GM12878 (cell line): ENCODE measurements at regions of chr11 and their contacts with region 1.

Region 1: DNA sequence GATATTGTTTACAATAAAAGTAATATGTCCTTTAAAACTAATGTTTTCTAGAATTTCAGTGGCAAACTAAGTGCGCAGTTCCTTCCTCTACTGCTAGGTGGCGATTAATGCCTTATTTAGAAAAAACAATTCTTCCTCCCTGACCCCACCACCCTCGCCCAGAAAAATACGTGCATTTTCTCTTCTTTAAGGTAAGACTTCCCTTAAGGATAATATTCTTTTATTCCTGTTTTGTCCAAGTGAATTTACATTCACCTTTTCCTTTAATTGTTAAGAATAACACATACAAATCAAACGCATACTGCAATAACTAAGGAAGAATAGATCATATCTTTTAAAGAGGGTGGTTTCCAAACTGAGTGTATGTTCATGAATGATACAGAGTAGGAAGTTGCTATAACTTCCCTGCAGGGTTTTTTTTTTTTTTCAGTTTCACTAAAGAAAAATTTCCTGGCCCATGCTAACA is 17.0 kb upstream of the PSMA1 start:
- DNase-seq: no peak
- ATAC-seq: peak; percentile 80
- H3K4me3 ChIP-seq: no peak overlapping the region
- H3K27ac ChIP-seq: no peak overlapping the region
- H3K4me1 ChIP-seq: no peaks in the 10 kb centered on the region
- H3K27me3 ChIP-seq: no peaks in the 10 kb centered on the region
- CTCF ChIP-seq: peak; percentile 69 to 88 (median 72)
- EP300 ChIP-seq: no peak
- POLR2A ChIP-seq: no peak
- RAD21 ChIP-seq: peak; percentile 76

Region 2: DNA sequence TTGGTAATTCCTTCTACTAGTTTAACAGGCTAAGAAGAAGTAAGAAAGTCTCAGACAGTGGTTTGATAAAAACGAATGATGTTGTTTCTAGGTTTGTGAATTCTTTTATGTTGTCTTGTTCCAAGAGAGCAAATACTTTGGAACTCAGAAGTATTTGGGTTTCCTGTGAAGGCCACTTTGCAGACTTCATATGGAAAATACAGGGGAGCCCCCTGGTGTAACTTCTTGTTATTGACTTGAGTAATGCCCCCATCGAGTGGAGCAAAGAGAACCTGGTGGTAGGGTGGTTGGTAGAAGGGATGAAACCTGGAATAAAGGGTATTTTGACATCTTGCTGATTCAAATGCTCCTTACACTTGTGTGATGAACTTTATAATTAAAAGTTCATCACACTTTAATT is 1001.3 kb before region 1 on chr11:
- CTCF ChIA-PET with region 1: no interaction called
- POLR2A ChIA-PET with region 1: no interaction called
- RAD21 ChIA-PET with region 1: no interaction called
- SMC1A ChIA-PET with region 1: no interaction called
- in situ Hi-C with region 1: no loop called
- intact Hi-C with region 1: no loop called
- DNase-seq: no peak
- ATAC-seq: no peak
- H3K4me3 ChIP-seq: no peak overlapping the region
- H3K27ac ChIP-seq: no peak overlapping the region
- H3K4me1 ChIP-seq: no peaks in the 10 kb centered on the region
- H3K27me3 ChIP-seq: no peaks in the 10 kb centered on the region
- CTCF ChIP-seq: no peak
- EP300 ChIP-seq: no peak
- POLR2A ChIP-seq: no peak
- RAD21 ChIP-seq: no peak

Region 3: DNA sequence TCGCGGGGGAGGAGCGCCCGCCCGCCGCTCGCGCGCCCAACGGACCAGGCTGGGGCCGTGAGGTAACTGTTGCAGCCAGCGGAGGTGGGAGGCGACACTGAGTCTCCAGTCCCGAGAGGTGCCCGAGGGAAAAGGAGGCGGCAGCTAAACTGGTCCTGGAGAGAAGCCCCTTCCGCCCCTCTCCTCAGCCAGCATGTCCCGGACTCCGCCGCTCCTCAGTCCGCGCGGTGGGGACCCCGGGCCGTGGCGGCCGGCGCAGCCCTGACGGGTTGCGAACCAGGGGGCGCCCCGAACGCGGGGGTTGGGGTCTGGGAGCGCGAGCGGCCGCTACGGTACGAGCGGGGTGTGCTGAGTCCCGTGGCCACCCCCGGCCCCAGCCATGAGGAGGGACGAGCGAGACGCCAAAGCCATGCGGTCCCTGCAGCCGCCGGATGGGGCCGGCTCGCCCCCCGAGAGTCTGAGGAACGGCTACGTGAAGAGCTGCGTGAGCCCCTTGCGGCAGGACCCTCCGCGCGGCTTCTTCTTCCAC is 106.6 kb after region 1 on chr11 and contains the start of gene PDE3B:
- CTCF ChIA-PET with region 1: no interaction called
- POLR2A ChIA-PET with region 1: no interaction called
- RAD21 ChIA-PET with region 1: no interaction called
- SMC1A ChIA-PET with region 1: no interaction called
- in situ Hi-C with region 1: no loop called
- intact Hi-C with region 1: loop called (anchors 2 kb)
- DNase-seq: no peak
- ATAC-seq: peak; percentile 56
- H3K4me3 ChIP-seq: peak within 1 kb of the TSS; percentile 61
- H3K27ac ChIP-seq: no peak within 1 kb of the TSS
- H3K4me1 ChIP-seq: no peaks in the 10 kb centered on the region
- H3K27me3 ChIP-seq: peaks cover 0 to 6% of the 10 kb centered on the region in 2 experiments; a peak in 3 of 4 replicates
- CTCF ChIP-seq: no peak
- EP300 ChIP-seq: no peak
- POLR2A ChIP-seq: peak; percentile 65
- RAD21 ChIP-seq: no peak
- polyA plus RNA-seq, gene PDE3B: 0.40 to 0.77 TPM

Region 4: GRCh38 chr11:14656536-14657457 is 119.6 kb after region 1 on chr11:
- CTCF ChIA-PET with region 1: no interaction called
- POLR2A ChIA-PET with region 1: no interaction called
- RAD21 ChIA-PET with region 1: no interaction called
- SMC1A ChIA-PET with region 1: no interaction called
- in situ Hi-C with region 1: no loop called
- intact Hi-C with region 1: no loop called
- DNase-seq: no peak
- ATAC-seq: no peak
- H3K4me3 ChIP-seq: no peak overlapping the region
- H3K27ac ChIP-seq: no peak overlapping the region
- H3K4me1 ChIP-seq: no peaks in the 10 kb centered on the region
- H3K27me3 ChIP-seq: no peaks in the 10 kb centered on the region
- CTCF ChIP-seq: no peak
- EP300 ChIP-seq: no peak
- POLR2A ChIP-seq: no peak
- RAD21 ChIP-seq: no peak

Region 5: GRCh38 chr11:14764579-14765527 is 227.7 kb after region 1 on chr11:
- CTCF ChIA-PET with region 1: interaction called, 3 read pairs
- POLR2A ChIA-PET with region 1: no interaction called
- RAD21 ChIA-PET with region 1: no interaction called
- SMC1A ChIA-PET with region 1: interaction called, 4 read pairs
- in situ Hi-C with region 1: loop called (anchors 25 kb)
- intact Hi-C with region 1: loop called (anchors 1 kb)
- DNase-seq: peak; percentile 65
- ATAC-seq: peak; percentile 91
- H3K4me3 ChIP-seq: no peak overlapping the region
- H3K27ac ChIP-seq: peak overlapping the region; percentile 6; the same call in 1 of the 2 replicates
- H3K4me1 ChIP-seq: peaks cover 12% of the 10 kb centered on the region; the same call in 1 of the 2 replicates
- H3K27me3 ChIP-seq: peaks cover 0 to 3% of the 10 kb centered on the region in 2 experiments; a peak in 1 of 4 replicates
- CTCF ChIP-seq: no peak
- EP300 ChIP-seq: peak; percentile 97 to 98; a peak in 3 of 4 replicates
- POLR2A ChIP-seq: no peak
- RAD21 ChIP-seq: no peak

Region 6: DNA sequence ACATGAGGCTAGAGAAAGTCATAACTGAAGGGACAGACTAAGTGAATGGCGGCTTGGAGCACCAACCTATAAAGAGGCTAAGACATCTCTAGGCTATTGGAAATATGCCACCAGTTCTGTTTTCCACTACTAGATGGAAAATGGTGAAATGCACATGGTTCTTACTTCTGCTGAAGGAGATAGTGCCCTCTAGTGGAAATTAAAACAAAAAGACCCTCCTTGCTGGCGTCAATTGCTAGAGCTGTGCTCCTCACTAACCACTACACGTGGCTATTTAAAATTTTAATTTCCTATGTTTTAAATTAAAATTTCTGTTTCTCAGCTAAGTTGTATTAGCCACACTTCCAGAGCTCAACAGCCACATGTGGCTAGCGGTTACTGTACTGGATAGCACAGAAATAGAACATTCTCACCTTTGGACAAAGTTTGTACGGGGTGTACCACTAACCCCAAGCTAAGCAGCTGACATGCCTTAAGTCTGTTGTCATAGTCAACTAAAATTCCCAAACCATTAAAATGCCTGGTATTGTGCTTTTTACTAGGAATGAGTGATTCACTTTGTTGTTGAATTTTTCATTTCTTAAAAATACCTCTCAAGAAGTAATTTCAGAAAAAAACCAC is 469.1 kb after region 1 on chr11:
- CTCF ChIA-PET with region 1: interaction called, 3 read pairs
- POLR2A ChIA-PET with region 1: no interaction called
- RAD21 ChIA-PET with region 1: no interaction called
- SMC1A ChIA-PET with region 1: no interaction called
- in situ Hi-C with region 1: no loop called
- intact Hi-C with region 1: loop called (anchors 10 kb)
- DNase-seq: peak; percentile 0
- ATAC-seq: peak; percentile 86
- H3K4me3 ChIP-seq: no peak overlapping the region
- H3K27ac ChIP-seq: no peak overlapping the region
- H3K4me1 ChIP-seq: no peaks in the 10 kb centered on the region
- H3K27me3 ChIP-seq: no peaks in the 10 kb centered on the region; a peak in 1 of 4 replicates
- CTCF ChIP-seq: peak; percentile 33 to 53 (median 50); a peak in 5 of 6 replicates
- EP300 ChIP-seq: no peak
- POLR2A ChIP-seq: no peak
- RAD21 ChIP-seq: peak; percentile 49

Region 7: DNA sequence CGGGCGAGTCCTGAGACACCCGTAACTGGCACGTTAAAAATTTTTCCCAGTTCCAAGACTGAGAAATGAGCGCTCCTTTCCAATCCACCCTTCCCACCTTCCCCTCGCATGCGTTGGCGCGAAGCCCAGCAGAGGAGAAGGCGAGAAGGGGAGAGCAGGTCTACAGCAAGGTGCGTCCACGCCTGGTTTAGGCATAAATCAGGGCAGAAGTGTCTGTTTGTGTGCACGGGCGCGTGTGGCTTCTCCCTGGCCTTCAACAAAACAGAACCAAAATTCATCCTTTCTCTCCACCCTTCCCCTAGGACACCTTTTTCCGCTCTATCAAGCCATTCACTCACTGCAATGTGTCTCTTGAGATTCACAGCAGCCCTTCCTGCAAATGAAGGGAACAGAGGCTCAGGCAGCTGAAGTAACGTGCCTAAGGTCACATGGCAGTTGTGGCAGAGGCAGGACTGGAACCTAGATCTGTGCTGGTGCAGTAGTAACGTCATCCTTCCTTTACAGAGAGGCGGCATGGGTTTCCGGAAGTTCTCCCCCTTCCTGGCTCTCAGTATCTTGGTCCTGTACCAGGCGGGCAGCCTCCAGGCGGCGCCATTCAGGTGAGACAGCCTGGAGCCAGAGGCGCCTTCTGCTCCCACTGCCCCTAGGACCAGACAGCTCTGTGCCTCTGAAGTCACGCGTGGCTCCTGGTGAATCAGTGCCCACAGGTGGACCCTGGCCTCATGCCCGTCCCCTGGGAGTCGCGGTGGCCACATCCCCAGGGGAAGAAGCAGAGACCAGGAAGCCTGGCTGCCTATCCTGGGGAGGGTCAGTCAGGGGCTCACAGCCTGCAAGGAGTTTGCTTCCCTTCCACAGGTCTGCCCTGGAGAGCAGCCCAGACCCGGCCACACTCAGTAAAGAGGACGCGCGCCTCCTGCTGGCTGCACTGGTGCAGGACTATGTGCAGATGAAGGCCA is 537.3 kb after region 1 on chr11:
- CTCF ChIA-PET with region 1: interaction called, 3 read pairs
- POLR2A ChIA-PET with region 1: no interaction called
- RAD21 ChIA-PET with region 1: no interaction called
- SMC1A ChIA-PET with region 1: no interaction called
- in situ Hi-C with region 1: no loop called
- intact Hi-C with region 1: loop called (anchors 10 kb)
- DNase-seq: no peak
- ATAC-seq: peak; percentile 99
- H3K4me3 ChIP-seq: no peak overlapping the region
- H3K27ac ChIP-seq: no peak overlapping the region
- H3K4me1 ChIP-seq: no peaks in the 10 kb centered on the region
- H3K27me3 ChIP-seq: 0 out of 4 replicates have a peak, but pooled peaks cover 0 to 2% of the 10 kb centered on the region in 2 experiments
- CTCF ChIP-seq: peak; percentile 67 to 88 (median 75)
- EP300 ChIP-seq: no peak
- POLR2A ChIP-seq: no peak
- RAD21 ChIP-seq: peak; percentile 65